MCF 10A (cell line): ENCODE measurements at regions of chrX and their contacts with region 1.

Region 1: DNA sequence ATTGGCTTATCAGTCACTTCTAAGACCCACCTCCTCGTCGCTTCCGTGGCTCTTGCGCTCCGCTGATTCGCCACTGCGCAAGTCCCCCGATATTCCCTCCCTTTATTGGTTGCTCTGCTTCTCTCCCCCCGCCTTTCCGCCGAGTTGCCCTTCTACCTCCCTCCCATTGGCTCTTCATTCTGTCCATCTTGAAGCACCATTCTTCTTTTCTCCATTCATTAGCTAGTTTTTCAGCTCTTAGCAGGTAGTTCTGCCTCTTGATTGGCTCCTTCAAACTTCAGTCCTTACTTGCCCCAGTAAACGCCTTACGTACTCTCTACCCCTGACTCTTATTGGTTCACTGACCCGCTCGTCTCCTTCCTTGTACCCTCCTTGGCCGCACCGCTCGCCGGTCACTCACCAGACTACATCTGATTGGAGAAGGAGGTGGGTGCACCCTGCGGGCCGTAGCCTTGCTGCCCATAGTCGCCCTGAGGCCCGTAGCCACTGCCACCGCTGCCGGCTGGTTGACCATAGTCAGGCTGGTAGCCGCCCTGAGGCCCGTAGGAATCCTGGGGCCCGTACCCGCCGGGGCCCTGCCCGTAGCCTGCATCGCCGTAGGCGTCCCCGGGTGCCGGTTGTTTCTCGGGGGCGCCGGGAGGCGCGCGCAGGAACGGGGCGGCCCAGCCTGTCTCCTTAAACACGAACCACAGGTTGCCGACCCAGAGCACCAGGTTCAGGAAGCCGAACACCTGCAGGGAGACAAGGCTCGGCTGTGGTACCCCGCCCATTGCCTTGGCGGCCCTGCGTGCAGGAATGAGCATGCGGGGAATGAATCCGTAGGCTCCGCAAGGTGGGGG is 5.1 kb upstream of the PRICKLE3 start:
- DNase-seq: peak; percentile 97
- H3K4me3 Mint-ChIP-seq: peak overlapping the region; percentile 83
- H3K27ac Mint-ChIP-seq: peak overlapping the region; percentile 86
- H3K4me1 Mint-ChIP-seq: peaks cover 16% of the 10 kb centered on the region
- H3K27me3 Mint-ChIP-seq: no peaks in the 10 kb centered on the region
- CTCF ChIP-seq: no peak

Region 2: DNA sequence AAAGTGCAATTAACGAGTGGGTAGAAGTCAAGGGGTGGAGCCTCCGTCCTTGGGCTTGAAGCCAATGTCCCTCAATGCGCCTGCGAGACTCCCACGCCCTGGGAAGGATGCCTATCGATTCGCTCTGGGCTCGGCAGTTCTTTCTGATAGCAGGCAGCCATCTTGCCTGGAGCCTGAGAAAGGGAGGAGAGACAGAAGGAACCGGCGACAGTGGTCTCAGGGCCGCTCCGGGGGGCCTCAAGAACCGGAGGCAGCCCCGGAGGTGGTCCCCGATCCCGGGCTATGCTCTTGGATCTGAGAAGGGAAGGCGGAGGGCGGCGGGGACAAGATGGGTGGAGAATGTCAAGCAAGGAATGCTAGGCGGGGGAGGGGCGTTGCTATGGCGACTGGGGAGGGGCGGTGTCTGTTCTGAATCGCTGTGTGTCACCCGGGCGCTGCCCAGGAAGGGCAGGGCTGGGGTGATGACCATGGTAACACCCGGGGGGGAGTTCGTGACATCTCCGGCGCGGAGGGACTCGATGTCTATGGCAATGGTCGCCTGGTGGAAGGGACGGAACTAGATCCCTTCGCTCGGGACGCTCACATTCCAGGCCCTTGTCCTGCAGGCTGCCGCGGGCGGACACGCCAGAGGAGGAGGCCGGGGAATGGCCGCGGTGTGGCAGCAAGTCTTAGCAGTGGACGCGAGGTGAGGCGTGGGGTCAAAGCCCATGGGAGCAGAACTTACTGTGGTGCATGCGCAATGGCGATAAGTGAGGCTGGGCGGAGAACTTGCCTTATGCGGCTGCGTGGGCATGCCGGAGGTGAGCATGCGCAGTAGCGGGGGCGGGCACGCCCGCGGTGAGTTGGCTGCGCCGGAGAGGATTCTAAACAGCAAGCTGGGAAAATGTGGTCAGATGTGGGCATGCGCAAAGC is 593.6 kb before region 1 on chrX and contains the start of gene WDR13:
- CTCF ChIA-PET with region 1: no interaction called
- POLR2A ChIA-PET with region 1: no interaction called
- intact Hi-C with region 1: no loop called
- DNase-seq: peak; percentile 87
- H3K4me3 Mint-ChIP-seq: peak within 1 kb of the TSS; percentile 90
- H3K27ac Mint-ChIP-seq: peak within 1 kb of the TSS; percentile 100
- H3K4me1 Mint-ChIP-seq: no peaks in the 10 kb centered on the region
- H3K27me3 Mint-ChIP-seq: no peaks in the 10 kb centered on the region
- CTCF ChIP-seq: no peak
- total RNA-seq, gene WDR13: 134 and 138 TPM in 2 replicates

Region 3: DNA sequence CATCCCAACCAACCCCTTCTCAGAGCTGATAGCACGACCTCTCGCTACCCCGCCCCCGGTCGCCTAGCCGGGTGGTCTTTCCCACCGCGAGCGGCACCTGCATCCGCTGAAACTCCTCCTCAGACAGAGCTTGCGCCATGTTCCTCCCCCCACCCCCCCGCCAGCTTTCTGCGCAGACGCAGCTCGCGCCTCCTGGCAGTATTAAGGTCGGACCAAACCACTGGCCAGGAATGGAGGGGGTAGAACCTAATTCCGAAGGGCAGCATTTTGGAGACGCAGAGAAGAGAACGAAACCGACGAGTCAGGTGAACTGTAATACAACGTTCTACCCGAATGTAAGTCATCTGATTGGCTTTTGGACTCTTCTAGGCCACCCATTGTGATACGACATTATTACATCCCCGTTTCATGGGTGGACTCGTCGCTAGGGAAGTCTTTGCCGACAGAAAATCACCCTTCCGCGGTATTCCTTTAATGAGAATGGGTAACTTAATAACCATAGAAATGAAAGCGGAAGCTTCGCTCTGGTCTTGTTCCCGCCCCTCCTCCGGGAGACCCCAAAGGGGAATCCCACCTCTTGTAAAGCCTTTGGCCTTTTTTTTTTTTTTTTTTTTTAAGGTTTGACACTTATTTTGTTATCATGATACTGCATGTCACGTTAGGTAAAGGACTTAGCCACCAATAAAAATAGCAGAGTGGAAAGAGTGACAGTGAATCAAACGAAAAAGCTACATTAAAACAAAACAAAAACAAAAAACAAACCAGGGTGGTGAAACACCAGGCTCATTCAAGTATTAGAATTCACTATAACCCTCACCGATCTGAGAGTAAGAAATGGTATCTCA is 188.9 kb before region 1 on chrX and contains the start of gene GRIPAP1:
- CTCF ChIA-PET with region 1: no interaction called
- POLR2A ChIA-PET with region 1: no interaction called
- intact Hi-C with region 1: no loop called
- DNase-seq: peak; percentile 80
- H3K4me3 Mint-ChIP-seq: peak within 1 kb of the TSS; percentile 95
- H3K27ac Mint-ChIP-seq: peak within 1 kb of the TSS; percentile 97
- H3K4me1 Mint-ChIP-seq: peaks cover 10% of the 10 kb centered on the region
- H3K27me3 Mint-ChIP-seq: no peaks in the 10 kb centered on the region
- CTCF ChIP-seq: no peak
- total RNA-seq, gene GRIPAP1: 49.6 and 51.0 TPM in 2 replicates

Region 4: DNA sequence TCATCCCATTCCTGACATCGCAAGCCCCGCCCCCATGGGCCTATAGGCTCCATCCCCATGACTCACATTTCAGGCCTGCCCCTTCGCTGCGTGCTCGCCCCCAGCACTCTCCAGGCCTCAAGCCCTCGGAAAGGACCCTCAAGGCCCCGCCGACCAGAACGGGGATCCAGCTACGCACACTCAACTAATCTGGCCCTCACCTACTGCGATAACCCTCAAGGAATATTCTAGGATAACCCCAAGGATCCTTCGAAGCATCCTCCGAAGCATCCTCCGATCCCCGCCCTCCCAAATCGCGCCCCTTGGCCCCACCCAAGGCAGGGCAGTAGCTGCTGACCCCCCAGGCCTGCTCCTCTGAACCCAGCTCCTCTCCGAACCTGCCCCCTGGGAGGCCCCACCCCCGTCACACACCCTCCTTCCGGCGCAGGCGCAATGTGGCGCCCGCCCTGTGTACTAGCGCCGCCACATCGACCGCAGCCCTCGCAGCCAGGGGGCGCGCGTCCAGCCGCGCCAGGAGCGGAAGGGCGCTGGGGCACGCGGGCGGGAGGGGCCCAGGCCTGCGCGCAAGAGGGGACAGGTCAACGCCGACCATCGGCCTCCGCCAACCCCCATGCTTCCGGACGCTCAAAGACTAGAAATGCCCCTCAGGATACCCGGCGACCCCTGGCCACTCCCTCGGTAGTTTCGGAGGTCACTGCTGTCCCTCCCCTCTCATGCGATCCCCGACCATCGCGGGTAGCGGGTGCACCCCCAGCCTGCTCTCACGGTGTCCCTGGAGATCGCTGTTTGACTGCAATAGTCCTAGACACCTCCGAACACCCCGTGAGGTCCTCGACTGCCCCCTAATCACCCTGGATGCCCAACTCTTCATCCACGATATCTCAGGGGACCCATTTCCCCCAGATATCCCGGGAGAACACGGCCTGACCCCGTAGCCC is 35.1 kb before region 1 on chrX:
- CTCF ChIA-PET with region 1: interaction called, 15 read pairs
- POLR2A ChIA-PET with region 1: interaction called, 7 read pairs
- intact Hi-C with region 1: no loop called
- DNase-seq: peak; percentile 91
- H3K4me3 Mint-ChIP-seq: peak overlapping the region; percentile 96
- H3K27ac Mint-ChIP-seq: peak overlapping the region; percentile 99
- H3K4me1 Mint-ChIP-seq: peaks cover 7% of the 10 kb centered on the region
- H3K27me3 Mint-ChIP-seq: no peaks in the 10 kb centered on the region
- CTCF ChIP-seq: peak; percentile 46

Region 5: DNA sequence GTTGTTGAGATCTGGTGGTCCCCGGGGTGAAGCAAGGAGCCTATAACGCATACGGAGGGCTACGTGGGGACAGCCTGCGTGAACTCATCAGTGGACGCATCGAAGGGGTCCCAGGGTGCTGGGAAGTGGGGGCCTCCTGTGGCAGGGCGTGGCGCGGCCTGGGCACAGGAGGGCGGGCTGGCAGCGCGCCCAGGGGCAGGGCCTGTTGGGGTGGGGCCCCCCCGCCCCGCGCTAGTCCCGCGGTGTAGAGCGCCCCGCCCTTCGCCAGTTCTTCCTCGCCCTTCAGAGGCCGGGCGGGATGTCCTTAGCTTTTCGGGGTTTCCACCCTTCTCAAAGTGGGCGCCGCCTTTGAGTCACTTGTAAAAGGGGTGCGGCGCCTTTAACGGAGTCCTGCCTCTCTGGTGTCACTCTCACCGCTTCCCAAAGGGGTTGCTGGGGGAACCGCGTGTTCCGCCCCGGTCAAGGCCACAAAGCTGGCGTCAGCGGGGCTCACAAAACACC is 18.9 kb before region 1 on chrX:
- CTCF ChIA-PET with region 1: interaction called, 3 read pairs
- POLR2A ChIA-PET with region 1: interaction called, 48 read pairs
- intact Hi-C with region 1: no loop called
- DNase-seq: peak; percentile 80
- H3K4me3 Mint-ChIP-seq: peak overlapping the region; percentile 88
- H3K27ac Mint-ChIP-seq: peak overlapping the region; percentile 54
- H3K4me1 Mint-ChIP-seq: peaks cover 20% of the 10 kb centered on the region
- H3K27me3 Mint-ChIP-seq: no peaks in the 10 kb centered on the region
- CTCF ChIP-seq: no peak

Region 6: GRCh38 chrX:49754233-49754857 is 563.1 kb after region 1 on chrX:
- CTCF ChIA-PET with region 1: interaction called, 7 read pairs
- POLR2A ChIA-PET with region 1: no interaction called
- intact Hi-C with region 1: loop called (anchors 10 kb)
- DNase-seq: peak; percentile 46
- H3K4me3 Mint-ChIP-seq: no peak overlapping the region
- H3K27ac Mint-ChIP-seq: no peak overlapping the region
- H3K4me1 Mint-ChIP-seq: no peaks in the 10 kb centered on the region
- H3K27me3 Mint-ChIP-seq: peaks cover 83% of the 10 kb centered on the region
- CTCF ChIP-seq: peak; percentile 77